Right cardiac atrium (tissue), 5 donors: ENCODE measurements at regions of chr7 and their contacts with region 1.

Region 1: GRCh38 chr7:105487579-105488571 is 34.2 kb downstream of the PUS7 start:
- DNase-seq: peak in 2 of 3 donors; percentile 39 to 48
- ATAC-seq: peak; percentile 87 to 98
- H3K4me3 ChIP-seq: no peak overlapping the region
- H3K27ac ChIP-seq: no peak overlapping the region
- H3K4me1 ChIP-seq: peaks cover 1% of the 10 kb centered on the region
- H3K27me3 ChIP-seq: no peaks in the 10 kb centered on the region

Region 2: DNA sequence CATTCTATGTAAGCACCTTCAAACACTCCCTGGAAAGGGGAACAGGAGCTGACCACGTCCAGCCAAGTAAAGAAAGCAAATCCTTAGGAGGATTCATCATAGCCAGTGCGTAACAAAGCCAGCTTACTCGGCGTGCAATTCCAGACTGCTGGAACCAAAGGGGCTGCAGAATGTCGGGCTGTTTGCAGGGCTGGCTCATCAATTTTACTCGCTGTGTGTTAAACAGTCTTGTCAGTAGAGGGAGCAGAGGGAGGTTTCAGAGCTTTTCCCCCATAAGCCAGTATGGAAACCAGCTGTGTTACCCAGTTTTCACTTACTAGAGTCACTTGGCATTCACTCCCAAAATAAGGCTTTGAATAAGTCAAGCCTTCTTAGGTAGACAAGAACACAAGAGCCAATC is 346.8 kb before region 1 on chr7:
- intact Hi-C with region 1: loop called in 1 of 4 experiments (anchors 10 kb)
- DNase-seq: no peak
- ATAC-seq: peak in 1 of 2 donors; percentile 25
- H3K4me3 ChIP-seq: no peak overlapping the region
- H3K27ac ChIP-seq: no peak overlapping the region
- H3K4me1 ChIP-seq: peaks cover 5% of the 10 kb centered on the region
- H3K27me3 ChIP-seq: no peaks in the 10 kb centered on the region

Region 3: DNA sequence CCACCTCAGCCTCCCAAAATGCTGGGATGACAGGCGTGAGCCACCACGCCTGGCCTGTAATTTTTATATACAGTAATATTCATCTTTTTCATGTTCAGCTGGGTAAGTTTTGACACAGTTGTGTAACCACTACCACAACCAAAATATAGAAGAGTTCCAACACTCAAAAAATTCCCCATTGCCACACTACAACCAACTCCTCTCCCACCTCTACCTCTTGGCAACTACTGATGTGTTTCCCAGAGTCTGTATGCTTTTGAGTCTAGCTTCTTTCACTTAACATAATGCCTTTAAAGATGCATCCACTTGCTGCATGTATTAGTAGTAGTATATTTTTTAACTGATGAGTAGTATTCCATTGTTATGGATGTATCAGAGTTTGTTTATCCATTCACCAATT is 189.9 kb before region 1 on chr7:
- intact Hi-C with region 1: no loop called
- DNase-seq: no peak
- ATAC-seq: no peak
- H3K4me3 ChIP-seq: no peak overlapping the region
- H3K27ac ChIP-seq: no peak overlapping the region
- H3K4me1 ChIP-seq: peaks cover 2% of the 10 kb centered on the region
- H3K27me3 ChIP-seq: no peaks in the 10 kb centered on the region